ENCODE measurements at regions of chr12 and their contacts with region 1.

Region 1: DNA sequence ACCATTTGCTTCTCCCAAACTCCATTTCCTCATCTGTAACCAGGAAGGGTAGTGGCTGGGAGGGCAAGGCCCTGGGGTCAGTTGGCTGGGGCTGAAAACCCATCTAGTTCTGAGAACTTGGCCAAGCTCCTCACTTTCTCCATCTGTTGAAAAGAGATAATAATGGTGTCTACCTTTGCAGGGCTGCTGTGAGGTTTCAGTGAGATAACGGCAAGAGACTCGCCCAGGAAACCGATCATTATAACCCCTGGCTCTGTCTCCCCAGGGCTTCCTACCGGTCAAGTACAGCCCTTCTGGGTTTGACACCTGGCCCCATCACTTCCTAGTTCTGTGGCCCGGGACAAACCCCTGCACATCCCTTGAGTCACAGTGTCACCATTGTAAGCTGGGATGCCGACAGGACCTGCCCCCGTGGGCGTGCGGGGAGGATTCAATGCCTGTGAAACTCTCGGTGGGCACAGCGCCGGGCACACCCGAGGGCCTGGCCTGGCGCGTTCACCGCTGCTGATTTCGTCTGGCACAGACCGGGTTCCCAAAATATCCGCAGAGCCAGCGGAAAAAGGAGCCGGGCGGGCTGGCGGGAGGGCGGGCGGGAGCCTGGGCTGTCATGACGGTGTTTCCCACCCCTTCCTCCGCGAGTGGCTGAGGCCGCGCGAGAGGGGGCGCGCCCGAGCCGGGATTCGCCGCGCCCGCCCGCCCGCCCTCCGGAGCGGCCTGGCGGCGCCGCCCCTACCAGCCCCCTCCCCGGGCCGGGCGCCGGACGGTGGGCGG is 4.4 kb downstream of the KMT5A start:
- DNase-seq: peak; percentile 86
- ATAC-seq: peak; percentile 43
- H3K4me3 Mint-ChIP-seq: peak overlapping the region; percentile 76
- H3K27ac Mint-ChIP-seq: peak overlapping the region; percentile 81
- H3K4me1 Mint-ChIP-seq: peaks cover 35% of the 10 kb centered on the region
- H3K27me3 Mint-ChIP-seq: no peaks in the 10 kb centered on the region

Region 2: GRCh38 chr12:122974274-122974891 is 414.0 kb before region 1 on chr12:
- CTCF ChIA-PET with region 1: no interaction called
- POLR2A ChIA-PET with region 1: no interaction called
- intact Hi-C with region 1: loop called (anchors 2 to 10 kb)
- DNase-seq: peak; percentile 99
- ATAC-seq: peak; percentile 86
- H3K4me3 Mint-ChIP-seq: peak overlapping the region; percentile 95
- H3K27ac Mint-ChIP-seq: peak overlapping the region; percentile 100
- H3K4me1 Mint-ChIP-seq: peaks cover 21% of the 10 kb centered on the region
- H3K27me3 Mint-ChIP-seq: no peaks in the 10 kb centered on the region

Region 3: GRCh38 chr12:123271001-123271729 is 117.2 kb before region 1 on chr12:
- CTCF ChIA-PET with region 1: interaction called, 3 read pairs
- POLR2A ChIA-PET with region 1: no interaction called
- intact Hi-C with region 1: loop called in 1 of 2 experiments (anchors 1 kb)
- DNase-seq: peak; percentile 90
- ATAC-seq: peak; percentile 75
- H3K4me3 Mint-ChIP-seq: peak overlapping the region; percentile 86
- H3K27ac Mint-ChIP-seq: no peak overlapping the region
- H3K4me1 Mint-ChIP-seq: peaks cover 23% of the 10 kb centered on the region
- H3K27me3 Mint-ChIP-seq: no peaks in the 10 kb centered on the region

Region 4: DNA sequence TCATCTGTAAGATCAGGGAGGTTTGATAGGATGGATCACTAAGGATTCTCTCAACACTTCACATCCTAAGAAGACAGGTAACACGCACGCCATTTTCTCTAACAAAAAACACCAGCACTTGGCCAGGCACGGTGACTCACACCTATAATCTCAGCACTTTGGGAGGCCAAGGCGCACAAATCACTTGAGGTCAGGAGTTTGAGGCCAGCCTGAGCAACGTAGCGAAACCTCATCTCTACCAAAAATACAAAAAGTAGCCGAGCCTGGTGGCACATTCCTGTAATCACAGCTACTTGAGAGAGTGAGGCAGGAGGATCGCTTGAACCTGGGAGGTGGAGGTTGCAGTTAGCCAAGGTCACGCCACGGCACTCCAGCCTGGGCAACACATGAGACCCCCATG is 106.3 kb before region 1 on chr12:
- CTCF ChIA-PET with region 1: no interaction called
- POLR2A ChIA-PET with region 1: no interaction called
- intact Hi-C with region 1: no loop called
- DNase-seq: no peak
- ATAC-seq: no peak
- H3K4me3 Mint-ChIP-seq: no peak overlapping the region
- H3K27ac Mint-ChIP-seq: no peak overlapping the region
- H3K4me1 Mint-ChIP-seq: peaks cover 6% of the 10 kb centered on the region
- H3K27me3 Mint-ChIP-seq: no peaks in the 10 kb centered on the region

Region 5: GRCh38 chr12:123427036-123427769 is 38.8 kb after region 1 on chr12:
- CTCF ChIA-PET with region 1: interaction called, 3 read pairs
- POLR2A ChIA-PET with region 1: interaction called, 7 read pairs
- intact Hi-C with region 1: loop called in 1 of 2 experiments (anchors 1 kb)
- DNase-seq: peak; percentile 53
- ATAC-seq: peak; percentile 79
- H3K4me3 Mint-ChIP-seq: peak overlapping the region; percentile 40
- H3K27ac Mint-ChIP-seq: peak overlapping the region; percentile 84
- H3K4me1 Mint-ChIP-seq: peaks cover 35% of the 10 kb centered on the region
- H3K27me3 Mint-ChIP-seq: no peaks in the 10 kb centered on the region

Region 6: GRCh38 chr12:123457980-123458783 is 69.8 kb after region 1 on chr12 and contains the start of gene SNRNP35:
- CTCF ChIA-PET with region 1: no interaction called
- POLR2A ChIA-PET with region 1: interaction called, 3 read pairs
- intact Hi-C with region 1: loop called in 1 of 2 experiments (anchors 1 kb)
- DNase-seq: peak; percentile 88
- ATAC-seq: peak; percentile 73
- H3K4me3 Mint-ChIP-seq: peak within 1 kb of the TSS; percentile 98
- H3K27ac Mint-ChIP-seq: peak within 1 kb of the TSS; percentile 100
- H3K4me1 Mint-ChIP-seq: peaks cover 26% of the 10 kb centered on the region
- H3K27me3 Mint-ChIP-seq: no peaks in the 10 kb centered on the region
- total RNA-seq, gene SNRNP35: 24.1 to 24.8 TPM

Region 7: DNA sequence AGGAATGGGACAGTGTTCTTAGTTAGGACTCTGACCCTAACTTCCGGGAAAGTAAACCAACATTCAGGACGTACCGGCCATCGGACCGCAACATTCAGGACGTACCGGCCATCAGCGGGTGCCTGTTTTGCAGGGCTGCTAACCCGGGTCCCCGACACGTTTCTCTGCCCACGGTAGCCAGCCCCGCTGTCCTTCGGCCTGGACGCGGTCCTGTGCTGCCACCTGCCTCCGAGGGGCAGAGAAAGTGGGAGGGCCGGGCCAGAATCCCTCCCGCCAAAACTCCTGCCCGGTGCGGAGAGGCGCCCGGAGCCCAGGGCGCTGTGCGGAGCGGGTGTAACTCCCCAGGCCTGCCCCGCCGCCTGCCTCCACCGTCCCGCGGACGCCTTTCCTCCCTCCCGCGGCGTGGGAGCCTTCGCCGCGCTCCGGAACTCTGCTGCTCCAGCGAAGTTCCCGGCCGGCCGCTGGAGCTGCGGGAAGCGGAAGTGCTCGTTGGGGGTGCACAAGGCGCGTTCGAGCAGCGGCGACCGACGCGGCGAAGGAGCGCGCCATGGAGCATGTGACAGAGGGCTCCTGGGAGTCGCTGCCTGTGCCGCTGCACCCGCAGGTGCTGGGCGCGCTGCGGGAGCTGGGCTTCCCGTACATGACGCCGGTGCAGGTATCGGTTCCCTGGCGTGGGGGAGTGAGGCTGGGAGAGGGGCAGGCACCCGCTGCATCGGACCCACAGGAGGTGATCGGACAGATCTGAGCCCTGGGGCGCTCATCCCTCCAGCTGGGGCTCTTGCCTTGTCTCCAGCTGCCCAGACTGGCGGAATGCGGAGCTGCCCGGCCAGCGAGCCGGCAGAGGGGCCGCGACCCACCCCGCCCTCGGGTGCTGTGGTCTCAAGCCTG is 213.5 kb after region 1 on chr12 and contains the start of gene DDX55:
- CTCF ChIA-PET with region 1: no interaction called
- POLR2A ChIA-PET with region 1: no interaction called
- intact Hi-C with region 1: loop called in 1 of 2 experiments (anchors 1 kb)
- DNase-seq: peak; percentile 93
- ATAC-seq: peak; percentile 95
- H3K4me3 Mint-ChIP-seq: peak within 1 kb of the TSS; percentile 85
- H3K27ac Mint-ChIP-seq: peak within 1 kb of the TSS; percentile 92
- H3K4me1 Mint-ChIP-seq: peaks cover 36% of the 10 kb centered on the region
- H3K27me3 Mint-ChIP-seq: no peaks in the 10 kb centered on the region
- total RNA-seq, gene DDX55: 44.3 to 49.4 TPM